MCF 10A (cell line): ENCODE measurements at regions of chr1 and their contacts with region 1.

Region 1: GRCh38 chr1:235971571-235972310 is 93.1 kb downstream of the NID1 start:
- DNase-seq: peak; percentile 98
- H3K4me3 Mint-ChIP-seq: no peak overlapping the region
- H3K27ac Mint-ChIP-seq: peak overlapping the region; percentile 9
- H3K4me1 Mint-ChIP-seq: peaks cover 17% of the 10 kb centered on the region
- H3K27me3 Mint-ChIP-seq: no peaks in the 10 kb centered on the region
- CTCF ChIP-seq: peak; percentile 99

Region 2: GRCh38 chr1:235468004-235468403 is 503.7 kb before region 1 on chr1:
- CTCF ChIA-PET with region 1: no interaction called
- POLR2A ChIA-PET with region 1: no interaction called
- intact Hi-C with region 1: no loop called
- DNase-seq: no peak
- H3K4me3 Mint-ChIP-seq: no peak overlapping the region
- H3K27ac Mint-ChIP-seq: peak overlapping the region; percentile 61
- H3K4me1 Mint-ChIP-seq: peaks cover 6% of the 10 kb centered on the region
- H3K27me3 Mint-ChIP-seq: no peaks in the 10 kb centered on the region
- CTCF ChIP-seq: no peak

Region 3: DNA sequence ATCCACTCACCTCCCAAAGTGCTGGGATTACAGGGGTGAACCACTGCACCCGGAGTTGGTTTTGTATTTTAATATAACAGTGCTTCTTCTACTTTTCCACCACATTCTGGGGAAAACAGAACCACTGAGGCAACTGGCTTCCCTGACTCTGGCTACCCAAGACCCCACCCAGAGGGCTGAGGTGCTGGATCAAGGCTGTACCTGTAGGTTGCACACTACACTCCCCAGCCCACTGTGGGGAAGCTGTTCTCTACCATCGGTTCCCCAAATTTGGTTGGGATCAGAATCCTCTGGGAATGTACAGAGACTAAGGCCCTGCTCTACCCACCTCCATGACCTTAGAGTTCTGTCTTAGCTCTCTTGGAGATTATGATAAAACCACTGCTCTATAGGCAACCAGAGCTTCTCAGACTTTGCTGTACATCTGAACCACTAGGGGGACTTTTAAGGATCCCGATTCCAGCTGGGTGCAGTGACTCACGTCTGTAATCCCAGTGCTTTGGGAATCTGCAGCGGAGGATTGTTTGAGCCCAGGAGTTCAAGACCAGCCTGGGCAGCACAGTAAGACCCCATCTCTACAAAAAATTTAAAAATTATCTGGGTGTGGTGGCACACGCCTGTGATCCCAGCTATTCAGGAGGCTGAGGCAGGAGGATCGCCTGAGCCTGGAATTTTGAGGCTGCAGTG is 373.7 kb before region 1 on chr1:
- CTCF ChIA-PET with region 1: interaction called, 4 read pairs
- POLR2A ChIA-PET with region 1: no interaction called
- intact Hi-C with region 1: loop called (anchors 5 kb)
- DNase-seq: peak; percentile 83
- H3K4me3 Mint-ChIP-seq: no peak overlapping the region
- H3K27ac Mint-ChIP-seq: no peak overlapping the region
- H3K4me1 Mint-ChIP-seq: no peaks in the 10 kb centered on the region
- H3K27me3 Mint-ChIP-seq: no peaks in the 10 kb centered on the region
- CTCF ChIP-seq: peak; percentile 70

Region 4: GRCh38 chr1:235821361-235821981 is 150.3 kb before region 1 on chr1:
- CTCF ChIA-PET with region 1: interaction called, 17 read pairs
- POLR2A ChIA-PET with region 1: interaction called, 3 read pairs
- intact Hi-C with region 1: no loop called
- DNase-seq: no peak
- H3K4me3 Mint-ChIP-seq: no peak overlapping the region
- H3K27ac Mint-ChIP-seq: no peak overlapping the region
- H3K4me1 Mint-ChIP-seq: peaks cover 10% of the 10 kb centered on the region
- H3K27me3 Mint-ChIP-seq: no peaks in the 10 kb centered on the region
- CTCF ChIP-seq: no peak

Region 5: DNA sequence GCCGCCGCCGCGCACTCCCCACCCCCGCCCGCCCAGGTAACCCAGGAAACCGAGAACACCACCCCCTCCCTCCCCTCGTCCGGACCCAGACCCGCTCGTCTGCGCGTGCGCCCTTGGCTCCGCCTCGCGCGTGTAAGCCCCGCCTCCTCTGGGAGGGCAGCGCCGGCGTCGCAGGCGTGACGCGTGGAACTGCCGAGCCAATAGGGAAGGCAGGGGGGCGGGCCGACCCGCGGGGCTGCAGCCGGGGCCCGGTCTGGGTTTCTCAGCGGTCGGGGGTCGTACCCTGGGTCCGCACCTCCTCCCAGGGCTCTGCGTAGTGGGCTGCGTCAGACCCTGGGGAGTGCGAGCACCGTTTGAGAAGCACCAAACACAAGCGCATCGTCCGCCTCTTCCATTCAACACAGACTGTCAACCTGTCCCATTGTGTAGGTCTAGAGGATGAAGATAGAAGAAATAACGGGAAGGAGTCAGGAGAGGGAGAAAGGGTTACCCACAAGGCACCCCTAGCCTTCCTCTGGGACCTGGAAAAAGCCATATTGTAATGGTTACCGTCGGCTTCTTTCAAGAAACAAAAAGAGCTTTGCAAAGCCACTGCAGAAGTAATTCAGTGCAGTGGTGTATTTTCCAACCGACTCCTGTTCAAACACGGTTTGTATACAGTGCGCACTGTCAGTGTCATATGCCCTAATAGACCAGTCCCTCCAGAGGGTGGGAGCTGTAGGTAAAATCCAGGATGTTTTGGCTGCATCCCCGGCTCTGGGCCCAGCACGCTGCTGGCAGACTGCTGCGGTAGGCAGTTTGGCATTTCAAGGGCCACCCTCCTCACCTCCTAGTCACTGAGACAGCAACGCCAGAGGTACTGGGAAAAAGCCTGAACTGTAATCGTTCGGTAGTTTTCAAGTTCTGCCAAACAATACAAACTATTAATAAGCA is 104.6 kb before region 1 on chr1:
- CTCF ChIA-PET with region 1: interaction called, 231 read pairs
- POLR2A ChIA-PET with region 1: interaction called, 82 read pairs
- intact Hi-C with region 1: loop called (anchors 1 kb)
- DNase-seq: peak; percentile 99
- H3K4me3 Mint-ChIP-seq: peak overlapping the region; percentile 99
- H3K27ac Mint-ChIP-seq: peak overlapping the region; percentile 95
- H3K4me1 Mint-ChIP-seq: peaks cover 35% of the 10 kb centered on the region
- H3K27me3 Mint-ChIP-seq: no peaks in the 10 kb centered on the region
- CTCF ChIP-seq: no peak

Region 6: DNA sequence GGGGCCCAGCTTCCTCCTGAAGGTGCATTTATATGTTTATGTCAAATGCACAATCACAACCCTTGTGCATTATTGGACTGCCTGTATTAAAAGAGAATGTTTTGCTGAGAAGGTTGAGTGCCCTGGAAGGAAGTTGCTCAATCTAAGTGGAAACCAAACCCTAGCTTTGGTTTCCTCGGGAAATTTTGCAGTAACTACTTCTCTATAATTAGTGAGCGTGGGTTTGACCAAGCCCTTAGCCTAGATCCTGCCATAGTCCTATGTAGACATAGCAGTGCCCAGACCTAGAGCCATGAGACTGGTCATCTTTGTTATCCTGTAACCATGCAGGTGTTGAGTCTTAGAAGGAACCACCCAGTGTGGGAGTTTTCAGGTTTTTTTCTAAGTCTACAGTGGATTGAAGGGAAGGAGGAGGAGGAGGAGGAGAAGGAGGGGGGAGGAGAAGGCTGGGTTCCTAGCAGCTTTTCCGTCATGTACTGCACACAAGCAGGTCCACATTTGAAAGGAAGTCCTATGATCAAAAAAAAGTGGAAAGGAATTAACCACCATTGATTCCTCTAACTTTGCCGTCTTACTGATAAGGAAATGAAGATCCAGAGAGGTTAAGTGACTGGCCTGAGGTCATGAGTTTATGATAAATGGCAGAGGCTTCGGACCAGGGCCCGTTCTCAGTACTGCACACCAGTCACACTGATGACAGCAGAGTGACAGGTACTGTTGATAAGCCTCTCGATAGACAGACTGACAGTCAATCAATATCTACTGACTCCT is 32.8 kb before region 1 on chr1:
- CTCF ChIA-PET with region 1: interaction called, 52 read pairs
- POLR2A ChIA-PET with region 1: interaction called, 26 read pairs
- intact Hi-C with region 1: no loop called
- DNase-seq: no peak
- H3K4me3 Mint-ChIP-seq: no peak overlapping the region
- H3K27ac Mint-ChIP-seq: no peak overlapping the region
- H3K4me1 Mint-ChIP-seq: peaks cover 44% of the 10 kb centered on the region
- H3K27me3 Mint-ChIP-seq: no peaks in the 10 kb centered on the region
- CTCF ChIP-seq: no peak

Region 7: GRCh38 chr1:235993652-235994051 is 21.9 kb after region 1 on chr1:
- CTCF ChIA-PET with region 1: interaction called, 24 read pairs
- POLR2A ChIA-PET with region 1: no interaction called
- intact Hi-C with region 1: no loop called
- DNase-seq: no peak
- H3K4me3 Mint-ChIP-seq: no peak overlapping the region
- H3K27ac Mint-ChIP-seq: no peak overlapping the region
- H3K4me1 Mint-ChIP-seq: peaks cover 16% of the 10 kb centered on the region
- H3K27me3 Mint-ChIP-seq: no peaks in the 10 kb centered on the region
- CTCF ChIP-seq: no peak